K562 (cell line): ENCODE measurements at regions of chrX and their contacts with region 1.

Region 1: DNA sequence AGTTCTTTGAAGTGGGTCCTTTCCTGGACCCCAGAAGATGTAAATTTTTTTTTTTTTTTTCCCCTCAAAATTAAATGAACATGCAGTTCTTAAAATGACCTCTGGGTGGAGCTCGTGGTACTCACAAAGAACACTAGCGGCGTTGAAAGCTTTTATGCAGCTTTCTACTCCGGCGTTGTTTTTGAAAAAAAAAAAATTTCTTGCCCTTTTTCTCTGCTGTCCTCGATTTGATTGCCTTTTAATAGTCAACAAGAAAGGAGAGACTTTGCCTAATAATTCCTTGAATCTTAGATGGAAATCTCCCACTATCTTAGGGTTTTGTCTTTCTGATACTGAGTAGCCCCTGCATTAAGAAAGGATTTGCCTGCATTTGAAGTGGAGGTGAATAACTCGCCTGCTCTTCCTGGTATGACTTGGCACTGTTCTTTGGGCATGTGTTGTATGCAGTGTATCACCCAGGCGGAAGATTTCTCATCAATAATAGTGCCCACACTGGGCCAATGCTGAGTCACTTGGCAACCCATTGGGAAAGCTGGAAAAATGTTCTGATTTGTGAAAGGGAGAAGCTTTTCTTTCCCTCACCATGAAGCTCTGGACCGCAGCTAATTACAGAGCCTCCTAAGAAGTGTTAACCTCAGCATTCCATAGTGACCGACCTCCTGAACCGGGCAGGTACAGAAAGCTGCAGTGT is 104.0 kb downstream of the PHEX start:
- DNase-seq: peak; percentile 27 to 49 (median 39)
- ATAC-seq: no peak
- H3K4me3 ChIP-seq: no peak overlapping the region
- H3K27ac ChIP-seq: no peak overlapping the region
- H3K4me1 ChIP-seq: no peaks in the 10 kb centered on the region
- H3K27me3 ChIP-seq: no peaks in the 10 kb centered on the region
- CTCF ChIP-seq: peak; percentile 35 to 73 (median 38); a peak in 4 of 6 replicates
- EP300 ChIP-seq: no peak
- POLR2A ChIP-seq: no peak
- RAD21 ChIP-seq: peak; percentile 51 to 57

Region 2: DNA sequence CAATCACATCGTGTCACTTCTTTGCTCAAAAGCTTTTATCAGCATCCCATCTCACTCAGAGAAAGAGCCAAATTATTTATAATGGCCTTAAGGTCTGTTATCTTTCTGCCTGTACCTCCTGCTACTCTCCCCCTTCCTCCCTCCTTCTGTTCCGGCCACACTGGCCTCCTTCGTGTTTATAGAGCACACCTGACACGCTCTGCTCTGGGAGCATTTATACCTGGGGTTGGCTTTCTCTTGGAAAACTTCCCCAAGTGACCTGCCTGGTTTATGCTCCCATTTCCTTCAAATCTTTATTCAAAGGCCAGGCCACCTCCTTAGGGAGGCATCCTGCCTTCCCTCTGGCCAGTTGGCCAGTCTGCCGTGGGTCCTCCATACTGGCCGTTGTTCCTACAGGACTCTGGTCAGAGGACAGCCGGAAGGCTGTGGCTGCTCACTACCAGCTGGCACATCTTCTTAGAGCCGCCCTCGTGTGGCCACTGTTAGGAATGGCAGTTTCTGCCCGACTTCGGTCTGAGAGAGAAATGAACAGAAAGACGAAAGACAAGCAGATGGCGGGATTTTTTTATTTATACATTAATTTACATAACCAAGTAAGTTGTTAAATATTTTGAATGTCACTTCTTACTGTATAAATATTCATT is 56.4 kb after region 1 on chrX:
- CTCF ChIA-PET with region 1: no interaction called
- POLR2A ChIA-PET with region 1: no interaction called
- in situ Hi-C with region 1: no loop called
- intact Hi-C with region 1: loop called (anchors 5 kb)
- DNase-seq: peak; percentile 32 to 63 (median 50)
- ATAC-seq: peak; percentile 90
- H3K4me3 ChIP-seq: no peak overlapping the region
- H3K27ac ChIP-seq: no peak overlapping the region
- H3K4me1 ChIP-seq: no peaks in the 10 kb centered on the region
- H3K27me3 ChIP-seq: no peaks in the 10 kb centered on the region
- CTCF ChIP-seq: peak; percentile 57 to 72 (median 63); a peak in 5 of 6 replicates
- EP300 ChIP-seq: no peak
- POLR2A ChIP-seq: no peak
- RAD21 ChIP-seq: peak; percentile 45 to 54

Region 3: DNA sequence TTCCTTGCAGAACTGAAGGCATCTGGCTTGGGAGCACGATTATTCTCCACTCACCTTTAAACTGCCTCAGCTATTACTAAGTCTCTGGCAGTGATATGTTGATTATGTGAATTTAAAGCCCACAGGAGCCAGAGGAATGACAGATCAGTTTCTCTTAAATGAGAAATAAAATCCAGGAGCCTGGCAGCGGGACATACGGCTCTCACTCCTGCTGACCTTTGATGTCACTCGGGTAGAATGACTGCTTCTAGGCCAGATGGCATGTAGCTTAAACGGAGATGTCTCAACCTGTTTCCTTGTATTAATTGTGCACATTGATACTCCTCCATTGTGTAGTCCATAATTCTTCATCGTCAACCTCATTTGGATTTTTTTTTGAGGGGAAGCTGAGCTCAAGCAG is 132.6 kb after region 1 on chrX:
- CTCF ChIA-PET with region 1: no interaction called
- POLR2A ChIA-PET with region 1: no interaction called
- in situ Hi-C with region 1: no loop called
- intact Hi-C with region 1: no loop called
- DNase-seq: no peak
- ATAC-seq: no peak
- H3K4me3 ChIP-seq: no peak overlapping the region
- H3K27ac ChIP-seq: no peak overlapping the region
- H3K4me1 ChIP-seq: no peaks in the 10 kb centered on the region
- H3K27me3 ChIP-seq: peaks cover 0 to 4% of the 10 kb centered on the region in 2 experiments; a peak in 1 of 5 replicates
- CTCF ChIP-seq: no peak
- EP300 ChIP-seq: no peak
- POLR2A ChIP-seq: no peak
- RAD21 ChIP-seq: no peak

Region 4: DNA sequence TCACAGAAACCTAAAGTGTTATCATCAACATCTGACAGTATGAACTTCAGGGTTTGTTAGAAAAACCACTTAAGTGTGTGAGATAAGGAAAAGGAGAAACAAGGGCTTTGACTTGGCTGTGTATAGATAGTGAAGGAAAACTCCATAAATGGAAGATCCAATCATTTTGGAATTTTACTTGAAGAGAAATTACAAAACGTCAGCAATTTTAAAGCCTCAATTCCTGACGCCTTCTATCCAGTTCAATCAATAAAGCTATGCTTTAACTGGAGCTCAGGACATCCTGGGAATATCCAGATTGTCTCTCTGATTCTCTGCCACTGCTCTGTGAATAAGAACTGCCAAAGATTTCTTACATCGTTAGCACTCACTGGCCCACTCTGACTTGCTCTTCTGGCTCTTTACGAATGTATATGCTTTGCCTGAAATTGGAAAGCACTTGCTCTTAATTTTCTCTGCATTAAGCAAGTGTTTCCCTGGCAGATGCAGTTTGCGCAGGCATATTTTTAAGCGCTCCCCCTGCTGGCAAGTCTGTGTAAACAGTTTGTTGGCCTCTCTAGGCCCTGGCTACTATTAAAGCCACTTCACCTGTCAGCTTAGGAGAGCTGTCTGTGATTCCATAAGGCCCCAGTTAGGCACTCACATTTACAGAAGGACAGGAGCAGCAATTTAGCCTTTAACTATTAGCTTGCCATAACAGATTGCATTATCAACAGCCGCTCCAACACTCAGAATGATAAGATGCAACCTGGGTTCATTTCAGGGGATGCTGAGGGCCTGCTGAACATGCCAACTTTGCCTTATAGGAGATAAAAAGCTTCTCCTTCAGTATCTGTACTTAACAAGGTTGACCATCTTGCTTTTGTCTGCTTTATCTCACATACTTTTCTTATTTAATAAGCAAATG is 612.2 kb after region 1 on chrX:
- CTCF ChIA-PET with region 1: no interaction called
- POLR2A ChIA-PET with region 1: no interaction called
- in situ Hi-C with region 1: no loop called
- intact Hi-C with region 1: loop called (anchors 5 kb)
- DNase-seq: peak; percentile 10 to 32 (median 20)
- ATAC-seq: peak; percentile 70; the same call in 2 of the 3 replicates
- H3K4me3 ChIP-seq: no peak overlapping the region
- H3K27ac ChIP-seq: no peak overlapping the region
- H3K4me1 ChIP-seq: no peaks in the 10 kb centered on the region
- H3K27me3 ChIP-seq: no peaks in the 10 kb centered on the region
- CTCF ChIP-seq: peak; percentile 21 to 49 (median 26); a peak in 3 of 6 replicates
- EP300 ChIP-seq: no peak
- POLR2A ChIP-seq: no peak
- RAD21 ChIP-seq: peak in 1 of 2 experiments; percentile 37; a peak in 2 of 4 replicates

Region 5: DNA sequence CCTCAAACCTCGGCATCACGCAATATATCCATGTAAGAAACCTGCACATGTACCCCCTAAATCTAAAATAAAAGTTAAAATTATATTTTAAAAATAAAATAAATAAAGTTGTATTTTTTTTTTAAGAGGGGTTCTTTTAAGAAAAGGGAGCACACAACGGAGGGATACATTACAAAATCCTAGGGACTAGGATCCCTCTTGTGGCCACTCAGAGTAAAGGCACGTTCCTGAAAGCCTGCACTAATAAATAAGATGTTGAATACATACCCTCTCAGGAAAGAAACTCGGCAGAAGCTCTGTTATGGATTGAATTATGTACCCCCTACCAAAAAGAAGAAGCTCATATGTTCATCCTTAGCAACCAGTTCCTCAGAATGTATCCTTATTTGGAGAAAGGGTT is 1480.2 kb after region 1 on chrX:
- CTCF ChIA-PET with region 1: no interaction called
- POLR2A ChIA-PET with region 1: no interaction called
- in situ Hi-C with region 1: no loop called
- intact Hi-C with region 1: loop called (anchors 10 kb)
- DNase-seq: peak; percentile 29 to 50 (median 44)
- ATAC-seq: peak; percentile 78
- H3K4me3 ChIP-seq: no peak overlapping the region
- H3K27ac ChIP-seq: no peak overlapping the region
- H3K4me1 ChIP-seq: no peaks in the 10 kb centered on the region
- H3K27me3 ChIP-seq: no peaks in the 10 kb centered on the region
- CTCF ChIP-seq: peak; percentile 27 to 47 (median 45); a peak in 4 of 6 replicates
- EP300 ChIP-seq: no peak
- POLR2A ChIP-seq: no peak
- RAD21 ChIP-seq: peak; percentile 27 to 48; a peak in 3 of 4 replicates